CD4-positive, alpha-beta T cell (primary cell): ENCODE measurements at regions of chr15 and their contacts with region 1.

Region 1: DNA sequence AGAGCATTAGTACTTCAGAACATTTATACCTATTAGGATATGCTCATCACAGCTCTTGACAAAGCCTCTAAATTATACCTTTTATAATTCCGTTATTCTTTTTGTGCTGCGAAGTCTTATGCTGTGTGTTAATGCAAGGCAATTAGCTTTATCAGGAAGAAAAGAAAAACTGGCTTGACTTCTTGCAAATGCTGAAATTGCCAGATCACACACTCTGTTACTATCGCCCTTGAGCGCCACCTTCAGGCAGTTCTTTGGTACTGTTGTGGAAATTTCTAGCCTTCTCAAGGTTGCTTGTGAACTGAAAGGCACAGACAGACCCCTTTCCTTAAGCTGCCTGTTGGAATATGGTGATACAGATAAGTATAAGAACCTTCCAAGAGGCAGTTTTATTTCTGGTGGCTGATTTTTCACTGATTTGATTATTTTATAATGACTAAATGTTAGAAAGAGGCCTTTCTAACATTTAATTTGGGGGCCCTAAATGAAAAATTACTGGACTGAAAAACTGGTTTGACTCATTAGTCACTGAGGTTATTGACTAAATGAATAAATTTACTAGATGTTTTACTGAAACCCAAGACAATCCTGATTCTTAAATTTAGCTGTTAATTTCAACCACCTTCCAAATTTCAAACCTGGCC is 126.2 kb upstream of the RASGRP1 start:
- DNase-seq: peak; percentile 71 to 93 (median 80)
- ATAC-seq: peak; percentile 34
- H3K4me3 ChIP-seq: no peak overlapping the region
- H3K4me3 Mint-ChIP-seq: peak overlapping the region; percentile 36
- H3K27ac ChIP-seq: peak overlapping the region in 1 of 2 donors; percentile 33
- H3K27ac Mint-ChIP-seq: peak overlapping the region; percentile 89
- H3K4me1 ChIP-seq: peaks cover 72% of the 10 kb centered on the region
- H3K4me1 Mint-ChIP-seq: peaks cover 74% of the 10 kb centered on the region
- H3K27me3 ChIP-seq: no peaks in the 10 kb centered on the region
- H3K27me3 Mint-ChIP-seq: no peaks in the 10 kb centered on the region
- CTCF ChIP-seq: peak; percentile 95

Region 2: DNA sequence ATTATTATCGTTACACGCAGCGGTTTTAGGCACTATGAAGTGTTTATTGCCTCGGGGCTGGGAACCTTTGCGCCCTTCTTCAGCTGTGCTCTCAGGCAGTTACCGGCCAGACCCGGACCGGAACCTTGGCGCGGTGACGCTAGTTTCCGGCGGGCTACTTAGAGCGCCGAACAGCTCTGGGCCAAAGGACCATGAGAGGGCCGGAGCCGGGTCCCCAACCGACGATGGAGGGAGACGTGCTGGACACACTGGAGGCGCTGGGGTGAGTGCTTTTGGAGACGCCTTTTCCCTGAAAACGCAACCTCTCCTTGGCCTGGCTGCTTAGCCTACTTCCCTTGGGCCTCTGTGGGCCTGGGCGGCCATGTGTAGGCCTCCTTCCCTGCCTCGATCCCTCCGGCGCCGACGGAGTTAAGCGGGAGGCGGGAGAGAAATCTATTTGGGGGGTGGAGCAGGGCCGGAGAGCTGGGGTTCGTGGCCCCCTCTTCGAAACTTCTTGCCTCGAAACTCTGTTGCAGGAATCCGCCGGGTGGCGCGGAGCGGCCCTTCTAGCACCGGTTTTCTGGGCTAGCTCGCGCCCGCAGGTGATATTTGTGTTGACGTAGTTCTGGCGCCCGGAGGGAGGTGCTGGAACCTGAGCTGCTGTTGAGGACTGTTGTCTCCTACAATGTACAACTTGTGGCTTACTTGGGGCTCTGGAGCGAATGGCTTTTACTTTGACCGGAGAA is 236.7 kb before region 1 on chr15 and contains the start of gene FAM98B:
- CTCF ChIA-PET with region 1: interaction called, 9 read pairs
- POLR2A ChIA-PET with region 1: interaction called, 20 read pairs
- intact Hi-C with region 1: no loop called
- DNase-seq: peak; percentile 72 to 90 (median 84)
- ATAC-seq: peak; percentile 90
- H3K4me3 ChIP-seq: peak within 1 kb of the TSS; percentile 80
- H3K4me3 Mint-ChIP-seq: peak within 1 kb of the TSS; percentile 94
- H3K27ac ChIP-seq: peak within 1 kb of the TSS; percentile 75 to 77
- H3K27ac Mint-ChIP-seq: peak within 1 kb of the TSS; percentile 95
- H3K4me1 ChIP-seq: peaks cover 14% of the 10 kb centered on the region
- H3K4me1 Mint-ChIP-seq: peaks cover 40% of the 10 kb centered on the region
- H3K27me3 ChIP-seq: no peaks in the 10 kb centered on the region
- H3K27me3 Mint-ChIP-seq: no peaks in the 10 kb centered on the region
- CTCF ChIP-seq: no peak
- total RNA-seq, gene FAM98B: 20.1 to 20.4 TPM

Region 3: DNA sequence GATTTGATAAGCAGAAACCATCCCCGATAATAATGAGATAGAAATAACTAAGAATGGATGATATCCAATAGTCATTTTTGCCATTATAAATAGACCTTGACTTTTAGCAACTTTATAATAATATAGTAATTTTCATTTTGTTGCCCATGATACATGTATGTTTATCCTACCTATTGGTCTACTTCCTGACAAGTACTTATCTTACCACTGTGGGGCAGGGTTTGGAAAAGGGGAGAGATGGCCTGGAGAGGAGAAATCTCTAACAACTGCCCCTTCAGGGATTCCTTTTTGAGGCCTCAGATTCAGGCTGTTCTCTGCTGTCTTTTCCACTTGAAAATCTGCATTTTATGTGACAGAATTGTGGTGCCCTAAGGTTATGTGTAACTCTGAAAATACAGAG is 194.7 kb before region 1 on chr15:
- CTCF ChIA-PET with region 1: interaction called, 10 read pairs
- POLR2A ChIA-PET with region 1: interaction called, 4 read pairs
- intact Hi-C with region 1: no loop called
- DNase-seq: no peak
- ATAC-seq: no peak
- H3K4me3 ChIP-seq: no peak overlapping the region
- H3K4me3 Mint-ChIP-seq: no peak overlapping the region
- H3K27ac ChIP-seq: no peak overlapping the region
- H3K27ac Mint-ChIP-seq: peak overlapping the region; percentile 76
- H3K4me1 ChIP-seq: no peaks in the 10 kb centered on the region
- H3K4me1 Mint-ChIP-seq: peaks cover 36% of the 10 kb centered on the region
- H3K27me3 ChIP-seq: no peaks in the 10 kb centered on the region
- H3K27me3 Mint-ChIP-seq: no peaks in the 10 kb centered on the region
- CTCF ChIP-seq: no peak

Region 4: GRCh38 chr15:38514601-38515000 is 176.2 kb before region 1 on chr15:
- CTCF ChIA-PET with region 1: interaction called, 14 read pairs
- POLR2A ChIA-PET with region 1: interaction called, 4 read pairs
- intact Hi-C with region 1: no loop called
- DNase-seq: no peak
- ATAC-seq: no peak
- H3K4me3 ChIP-seq: no peak overlapping the region
- H3K4me3 Mint-ChIP-seq: no peak overlapping the region
- H3K27ac ChIP-seq: no peak overlapping the region
- H3K27ac Mint-ChIP-seq: peak overlapping the region; percentile 75
- H3K4me1 ChIP-seq: no peaks in the 10 kb centered on the region
- H3K4me1 Mint-ChIP-seq: peaks cover 8% of the 10 kb centered on the region
- H3K27me3 ChIP-seq: no peaks in the 10 kb centered on the region
- H3K27me3 Mint-ChIP-seq: no peaks in the 10 kb centered on the region
- CTCF ChIP-seq: no peak

Region 5: GRCh38 chr15:38647683-38648082 is 43.1 kb before region 1 on chr15:
- CTCF ChIA-PET with region 1: interaction called, 53 read pairs
- POLR2A ChIA-PET with region 1: interaction called, 379 read pairs
- intact Hi-C with region 1: loop called in 1 of 2 experiments (anchors 1 kb)
- DNase-seq: no peak
- ATAC-seq: no peak
- H3K4me3 ChIP-seq: no peak overlapping the region
- H3K4me3 Mint-ChIP-seq: peak overlapping the region; percentile 4
- H3K27ac ChIP-seq: peak overlapping the region in 1 of 2 donors; percentile 20
- H3K27ac Mint-ChIP-seq: peak overlapping the region; percentile 93
- H3K4me1 ChIP-seq: peaks cover 62% of the 10 kb centered on the region
- H3K4me1 Mint-ChIP-seq: peaks cover 81% of the 10 kb centered on the region
- H3K27me3 ChIP-seq: no peaks in the 10 kb centered on the region
- H3K27me3 Mint-ChIP-seq: no peaks in the 10 kb centered on the region
- CTCF ChIP-seq: no peak

Region 6: DNA sequence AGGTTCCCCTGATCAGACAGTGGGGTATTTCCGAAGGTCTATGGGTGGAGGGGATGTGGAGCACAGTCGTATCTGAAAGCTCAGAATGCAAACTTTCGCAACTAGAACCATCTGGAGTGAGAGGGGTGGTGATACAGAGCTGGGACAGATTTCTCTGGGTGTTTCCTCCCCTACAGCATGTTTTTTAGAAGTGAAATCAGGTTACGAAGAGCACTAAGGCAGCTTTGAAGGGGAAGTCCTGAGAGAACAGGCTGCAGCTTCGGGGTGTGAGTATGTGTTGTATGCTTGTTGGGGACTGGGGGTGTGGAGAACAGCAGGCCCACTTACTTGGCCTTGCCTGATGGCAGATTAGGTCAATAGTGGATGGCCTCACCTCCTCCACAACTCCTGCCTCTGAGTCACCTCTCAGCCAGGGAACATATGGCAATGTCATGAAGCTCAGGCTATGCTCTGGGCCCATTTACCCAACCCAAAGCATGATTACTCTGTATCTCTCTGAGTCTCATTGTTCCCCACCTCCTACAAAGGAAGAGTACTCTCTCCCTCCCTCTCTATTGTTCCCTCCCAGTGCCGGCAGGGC is 19.0 kb before region 1 on chr15:
- CTCF ChIA-PET with region 1: interaction called, 17 read pairs
- POLR2A ChIA-PET with region 1: interaction called, 85 read pairs
- intact Hi-C with region 1: loop called in 1 of 2 experiments (anchors 1 kb)
- DNase-seq: peak in 11 of 14 experiments; percentile 23 to 91 (median 44)
- ATAC-seq: peak; percentile 51
- H3K4me3 ChIP-seq: no peak overlapping the region
- H3K4me3 Mint-ChIP-seq: peak overlapping the region; percentile 61
- H3K27ac ChIP-seq: peak overlapping the region; percentile 85 to 94
- H3K27ac Mint-ChIP-seq: peak overlapping the region; percentile 95
- H3K4me1 ChIP-seq: peaks cover 80% of the 10 kb centered on the region
- H3K4me1 Mint-ChIP-seq: peaks cover 68% of the 10 kb centered on the region
- H3K27me3 ChIP-seq: no peaks in the 10 kb centered on the region
- H3K27me3 Mint-ChIP-seq: no peaks in the 10 kb centered on the region
- CTCF ChIP-seq: no peak